Right ventricle myocardium inferior (tissue), 1 donor: ENCODE measurements at regions of chr3 and their contacts with region 1.

Region 1: DNA sequence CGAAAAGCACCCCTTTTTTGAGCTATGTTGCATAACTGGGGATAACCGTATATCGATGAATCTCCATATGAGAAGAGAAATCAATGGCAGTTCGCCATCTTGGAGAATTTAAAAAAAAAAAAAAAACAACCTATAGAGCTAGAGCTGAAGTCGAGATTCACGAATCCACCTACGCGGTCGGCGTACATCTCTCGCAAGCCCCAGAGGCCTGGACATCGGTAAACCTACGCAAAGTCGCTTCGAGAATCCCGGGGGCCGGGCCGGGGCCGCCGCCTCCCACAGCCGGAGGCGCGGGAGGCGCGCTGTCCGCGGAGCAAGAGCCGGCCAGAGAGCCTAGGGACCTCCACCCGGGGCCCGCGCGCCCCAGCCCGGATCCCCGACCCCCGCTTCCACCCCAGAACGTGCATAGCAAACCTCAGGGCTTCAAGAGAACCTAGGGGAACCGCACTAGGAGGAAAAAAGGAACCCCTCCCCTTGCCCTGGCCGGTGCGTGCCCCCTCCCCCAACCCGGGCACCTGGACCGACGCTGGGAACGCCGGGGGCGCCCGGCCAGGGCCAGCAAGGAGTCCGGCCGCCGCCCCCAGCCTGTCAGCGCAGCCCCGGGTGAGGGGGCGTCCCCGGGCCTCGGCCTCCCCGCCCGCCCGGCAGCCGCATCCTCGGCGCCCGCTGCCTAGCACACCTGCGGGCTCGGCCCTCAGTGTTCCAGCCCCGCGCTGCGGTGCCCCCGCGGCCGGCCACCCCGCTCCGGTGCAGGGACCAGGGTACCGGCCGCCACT is 567 bp downstream of the PFN2 start:
- DNase-seq: peak; percentile 89
- ATAC-seq: peak; percentile 74

Region 2: DNA sequence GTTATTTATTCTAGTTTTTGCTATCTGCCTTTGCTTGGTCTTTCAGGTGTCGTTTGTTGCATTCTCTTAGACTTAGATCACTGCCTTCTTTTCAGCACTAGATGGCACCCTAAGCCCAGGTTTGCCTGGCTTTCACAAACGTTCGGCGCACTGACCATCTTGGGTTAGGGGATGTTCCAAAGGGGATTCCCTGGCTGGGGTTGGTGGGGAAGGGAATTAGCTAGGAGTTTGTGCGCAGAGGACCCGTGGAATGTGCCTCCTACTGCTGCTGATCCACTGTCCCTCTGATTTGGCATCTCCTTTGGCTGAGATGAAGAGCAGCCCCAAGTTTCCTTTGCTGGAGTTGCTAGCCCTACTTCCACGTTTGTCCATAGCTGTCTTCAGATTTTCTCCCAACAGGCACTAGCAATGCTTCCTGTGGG is 33.3 kb before region 1 on chr3:
- intact Hi-C with region 1: no loop called
- DNase-seq: peak; percentile 50
- ATAC-seq: peak; percentile 44

Region 3: DNA sequence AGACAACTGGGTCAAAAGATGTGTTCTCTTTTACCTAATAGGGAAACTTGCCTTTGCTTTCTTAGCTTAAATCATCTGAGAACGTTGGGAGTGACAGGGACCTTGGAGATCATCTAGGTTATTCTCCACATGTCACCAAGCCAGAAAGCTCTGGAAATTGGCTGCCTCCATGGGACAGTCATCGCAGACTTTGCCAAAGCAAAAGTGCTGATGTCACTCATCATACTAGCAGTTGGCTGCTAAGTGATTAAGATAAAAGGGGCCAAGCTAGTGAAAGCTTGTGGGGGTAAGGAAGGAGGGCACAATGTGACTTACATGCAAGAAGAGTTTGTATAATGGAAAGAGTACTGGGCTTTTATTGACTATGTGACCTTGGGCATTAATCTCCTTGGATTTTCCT is 198.6 kb after region 1 on chr3:
- intact Hi-C with region 1: loop called (anchors 5 kb)
- DNase-seq: no peak
- ATAC-seq: peak; percentile 88

Region 4: GRCh38 chr3:150183678-150184425 is 213.7 kb after region 1 on chr3:
- intact Hi-C with region 1: loop called (anchors 1 kb)
- DNase-seq: peak; percentile 73
- ATAC-seq: peak; percentile 89

Region 5: GRCh38 chr3:150220799-150221198 is 250.7 kb after region 1 on chr3:
- intact Hi-C with region 1: loop called (anchors 1 kb)
- DNase-seq: no peak
- ATAC-seq: no peak

Region 6: GRCh38 chr3:150495563-150496168 is 525.5 kb after region 1 on chr3:
- intact Hi-C with region 1: loop called (anchors 10 kb)
- DNase-seq: no peak
- ATAC-seq: no peak